AG04449 (cell line): ENCODE measurements at regions of chr2 and their contacts with region 1.

Region 1: DNA sequence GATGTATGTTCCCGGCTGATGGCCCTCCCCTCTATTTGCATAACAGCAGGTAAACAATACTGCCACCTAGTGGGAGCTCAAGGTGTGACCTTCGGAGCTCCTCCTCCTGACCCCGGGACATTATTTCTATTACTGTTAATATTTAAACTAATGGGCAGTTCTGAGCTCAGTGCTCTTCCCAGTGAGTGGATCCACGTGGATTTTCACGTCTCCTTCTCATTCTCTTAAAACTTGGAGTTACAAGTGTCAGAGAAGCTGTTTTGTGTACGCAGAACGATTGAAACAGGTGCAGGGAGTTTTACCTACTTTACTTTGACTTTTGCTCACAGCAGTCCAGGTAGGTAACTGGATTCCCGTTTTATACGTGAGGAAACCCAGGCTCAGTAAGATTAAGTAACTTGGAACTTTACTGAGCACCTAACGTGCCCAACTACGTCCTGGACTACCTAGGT is 127.3 kb downstream of the PRKCE start:
- DNase-seq: no peak
- H3K4me3 ChIP-seq: no peak overlapping the region
- CTCF ChIP-seq: peak; percentile 67

Region 2: GRCh38 chr2:45643543-45644542 is 134.9 kb before region 1 on chr2:
- CTCF ChIA-PET with region 1: interaction called, 53 read pairs
- POLR2A ChIA-PET with region 1: no interaction called
- DNase-seq: no peak
- H3K4me3 ChIP-seq: peak overlapping the region; percentile 64
- CTCF ChIP-seq: peak; percentile 83

Region 3: GRCh38 chr2:45759310-45759851 is 19.4 kb before region 1 on chr2:
- CTCF ChIA-PET with region 1: interaction called, 29 read pairs
- POLR2A ChIA-PET with region 1: no interaction called
- DNase-seq: peak; percentile 57
- H3K4me3 ChIP-seq: peak overlapping the region; percentile 45
- CTCF ChIP-seq: no peak

Region 4: DNA sequence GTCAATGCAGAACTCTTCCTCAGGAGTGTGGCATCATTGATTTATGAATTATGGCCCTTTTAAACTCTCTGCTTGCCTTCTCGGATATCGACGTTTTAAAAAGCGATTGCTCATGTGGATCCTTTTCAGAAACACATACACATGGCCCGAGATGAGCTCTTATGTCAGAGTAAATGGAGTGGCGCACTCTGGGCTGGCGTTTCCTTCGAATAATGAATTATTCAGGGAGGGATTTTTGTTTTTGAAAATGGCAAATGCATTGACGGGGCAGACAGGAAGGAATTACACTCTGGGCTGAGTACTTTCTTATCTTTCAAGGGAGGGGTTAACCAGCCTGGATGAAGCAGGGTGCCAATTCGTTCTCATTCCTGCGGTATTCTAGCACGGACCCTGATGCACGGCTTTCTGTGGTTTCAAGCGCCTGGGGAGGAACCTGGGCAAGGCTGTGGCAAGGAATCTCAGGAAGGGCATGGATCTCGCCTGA is 15.4 kb after region 1 on chr2:
- CTCF ChIA-PET with region 1: interaction called, 57 read pairs
- POLR2A ChIA-PET with region 1: no interaction called
- DNase-seq: no peak
- H3K4me3 ChIP-seq: no peak overlapping the region
- CTCF ChIP-seq: no peak

Region 5: GRCh38 chr2:45851613-45852304 is 73.0 kb after region 1 on chr2:
- CTCF ChIA-PET with region 1: interaction called, 10 read pairs
- POLR2A ChIA-PET with region 1: no interaction called
- DNase-seq: no peak
- H3K4me3 ChIP-seq: no peak overlapping the region
- CTCF ChIP-seq: no peak